A549 (cell line): ENCODE measurements at regions of chr17 and their contacts with region 1.

Region 1: GRCh38 chr17:65556014-65556909 is 5.2 kb downstream of the AXIN2 start:
- DNase-seq: peak; percentile 69 to 78
- ATAC-seq: peak; percentile 21 to 81; a peak in 3 of 6 replicates
- H3K4me3 ChIP-seq: no peak overlapping the region
- H3K27ac ChIP-seq: peak overlapping the region in 1 of 2 experiments; percentile 37; a peak in 3 of 6 replicates
- H3K4me1 ChIP-seq: peaks cover 31% of the 10 kb centered on the region
- CTCF ChIP-seq: peak; percentile 87
- EP300 ChIP-seq: no peak
- POLR2A ChIP-seq: no peak
- RAD21 ChIP-seq: peak; percentile 69 to 70

Region 2: GRCh38 chr17:65537845-65538674 is 18.2 kb before region 1 on chr17:
- CTCF ChIA-PET with region 1: interaction called, 54 read pairs
- POLR2A ChIA-PET with region 1: no interaction called
- DNase-seq: no peak
- ATAC-seq: no peak
- H3K4me3 ChIP-seq: no peak overlapping the region
- H3K27ac ChIP-seq: no peak overlapping the region
- H3K4me1 ChIP-seq: peaks cover 8% of the 10 kb centered on the region
- CTCF ChIP-seq: no peak
- EP300 ChIP-seq: no peak
- POLR2A ChIP-seq: no peak
- RAD21 ChIP-seq: no peak

Region 3: DNA sequence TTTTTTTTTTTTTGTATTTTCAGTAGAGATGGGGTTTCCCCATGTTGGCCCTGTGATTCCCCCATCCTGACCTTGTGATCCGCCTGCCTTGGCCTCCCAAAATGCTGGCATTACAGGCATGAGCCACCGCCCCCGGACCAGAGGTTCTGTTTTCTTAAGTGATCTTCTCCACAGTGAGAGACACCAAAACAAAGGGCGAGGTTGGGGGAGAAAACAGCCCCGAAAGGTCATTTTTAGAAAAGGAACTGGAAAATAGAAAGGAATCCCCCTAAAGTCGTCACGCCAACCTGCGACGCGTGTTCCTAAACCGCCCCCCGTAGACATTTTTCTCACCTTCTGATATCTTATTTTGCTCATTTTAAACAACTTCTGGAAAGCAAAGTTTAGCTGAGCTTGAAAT is 11.3 kb after region 1 on chr17:
- CTCF ChIA-PET with region 1: interaction called, 10 read pairs
- POLR2A ChIA-PET with region 1: no interaction called
- DNase-seq: no peak
- ATAC-seq: no peak
- H3K4me3 ChIP-seq: no peak overlapping the region
- H3K27ac ChIP-seq: no peak overlapping the region
- H3K4me1 ChIP-seq: peaks cover 10% of the 10 kb centered on the region
- CTCF ChIP-seq: no peak
- EP300 ChIP-seq: no peak
- POLR2A ChIP-seq: no peak
- RAD21 ChIP-seq: no peak

Region 4: DNA sequence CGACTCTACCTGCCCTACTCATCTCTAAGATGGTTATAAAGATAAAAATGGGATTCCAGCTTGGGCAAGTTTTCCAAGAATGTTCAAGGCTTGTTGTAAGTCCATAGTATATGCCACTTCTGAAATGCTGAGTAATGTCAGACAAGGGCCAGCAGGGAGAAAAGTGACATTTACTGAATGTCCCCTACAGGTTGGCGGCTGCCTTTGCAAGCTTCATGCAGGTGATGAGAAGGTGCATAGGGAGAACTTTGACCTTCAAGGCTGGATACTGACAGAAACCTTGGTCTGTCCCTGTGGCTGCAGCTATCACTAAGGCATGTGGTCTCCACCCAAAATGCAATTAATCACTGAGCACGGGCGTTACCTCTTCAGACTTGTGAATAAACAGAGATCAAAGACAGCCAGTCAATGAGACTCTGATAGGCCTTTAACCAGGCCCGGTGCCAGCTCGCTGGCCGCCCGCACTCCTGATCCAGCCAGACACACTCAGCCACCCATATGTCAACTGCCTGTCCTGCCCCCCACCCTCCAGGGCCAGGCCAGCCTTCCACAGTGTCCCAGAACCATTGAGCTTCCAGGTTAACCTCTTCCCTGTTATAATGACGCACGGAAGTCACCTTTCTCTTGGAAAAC is 32.0 kb after region 1 on chr17:
- CTCF ChIA-PET with region 1: interaction called, 10 read pairs
- POLR2A ChIA-PET with region 1: no interaction called
- DNase-seq: peak; percentile 57 to 70
- ATAC-seq: peak; percentile 64 to 65; a peak in 5 of 6 replicates
- H3K4me3 ChIP-seq: no peak overlapping the region
- H3K27ac ChIP-seq: peak overlapping the region in 1 of 2 experiments; percentile 43; a peak in 3 of 6 replicates
- H3K4me1 ChIP-seq: peaks cover 35% of the 10 kb centered on the region
- CTCF ChIP-seq: no peak
- EP300 ChIP-seq: no peak
- POLR2A ChIP-seq: no peak
- RAD21 ChIP-seq: no peak

Region 5: DNA sequence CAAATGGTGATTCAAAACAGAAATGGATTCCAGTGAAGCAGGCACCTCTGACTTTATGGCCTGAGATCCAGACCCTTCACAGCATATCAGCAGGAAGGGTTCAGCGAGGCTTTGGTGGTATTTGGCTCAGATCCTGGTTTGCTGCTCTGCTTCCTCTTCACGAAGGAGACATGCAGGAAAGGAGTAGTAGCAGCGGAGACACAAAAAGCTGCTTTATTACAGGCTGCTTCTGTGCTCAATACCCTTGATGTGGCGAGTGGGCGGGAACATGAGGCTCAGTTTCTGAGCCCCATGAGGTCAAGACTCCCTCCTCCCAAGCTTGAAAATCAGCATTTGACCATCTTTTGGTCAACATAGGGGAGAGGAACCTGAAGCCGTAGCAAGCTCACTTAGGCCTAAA is 218.5 kb after region 1 on chr17:
- CTCF ChIA-PET with region 1: no interaction called
- POLR2A ChIA-PET with region 1: no interaction called
- DNase-seq: no peak
- ATAC-seq: no peak
- H3K4me3 ChIP-seq: no peak overlapping the region
- H3K27ac ChIP-seq: no peak overlapping the region; a peak in 1 of 6 replicates
- H3K4me1 ChIP-seq: peaks cover 6% of the 10 kb centered on the region; the same call in 2 of the 3 replicates
- CTCF ChIP-seq: no peak
- EP300 ChIP-seq: no peak
- POLR2A ChIP-seq: no peak
- RAD21 ChIP-seq: no peak